ENCODE measurements at regions of chr14 and their contacts with region 1.

Region 1: GRCh38 chr14:64891839-64892375 is 12.2 kb upstream of the SPTB start:
- DNase-seq: peak in 7 of 9 donors; percentile 41 to 68 (median 61)
- ATAC-seq: peak; percentile 90
- H3K4me3 ChIP-seq: no peak overlapping the region
- H3K4me3 Mint-ChIP-seq: no peak overlapping the region
- H3K27ac ChIP-seq: no peak overlapping the region
- H3K27ac Mint-ChIP-seq: no peak overlapping the region
- H3K4me1 ChIP-seq: no peaks in the 10 kb centered on the region
- H3K4me1 Mint-ChIP-seq: peaks cover 0 to 3% (median 0%) of the 10 kb centered on the region in 7 donors
- H3K27me3 ChIP-seq: no peaks in the 10 kb centered on the region
- H3K27me3 Mint-ChIP-seq: peaks cover 0 to 39% (median 9%) of the 10 kb centered on the region in 5 donors

Region 2: DNA sequence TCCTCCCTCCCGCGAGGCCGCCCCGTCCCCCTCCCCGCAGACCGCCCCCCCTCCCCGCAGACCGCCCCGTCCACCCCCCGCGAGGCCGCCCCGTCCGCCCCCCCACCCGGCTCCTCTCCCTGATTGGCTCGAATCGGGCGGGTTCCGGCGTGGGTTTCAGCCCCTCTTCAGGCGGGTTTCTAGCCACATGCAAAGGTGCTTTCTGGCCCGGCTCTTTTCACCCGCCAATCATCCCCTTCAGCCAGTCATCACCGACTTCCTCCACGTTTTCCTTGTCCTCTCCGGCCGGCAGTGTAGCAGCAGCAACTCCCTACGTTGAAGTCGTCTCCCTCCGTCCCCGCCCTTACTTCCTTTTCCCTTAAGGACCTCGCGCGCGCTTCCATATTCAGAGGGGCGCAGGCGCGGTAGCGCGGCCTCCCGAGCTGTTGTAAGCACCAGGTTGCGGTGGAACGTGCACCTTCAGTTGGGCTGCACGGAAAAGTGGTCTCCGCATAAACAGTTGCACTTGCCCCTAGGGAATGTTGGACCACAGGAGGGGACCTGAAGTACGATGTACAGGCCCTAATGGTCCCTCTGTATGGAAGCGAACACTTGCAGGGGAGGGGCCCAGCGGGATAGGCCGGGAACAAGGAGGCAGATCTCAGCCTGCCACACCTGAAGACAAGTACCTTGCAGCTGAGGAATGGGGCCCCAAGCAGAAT is 553.1 kb before region 1 on chr14:
- CTCF ChIA-PET with region 1: no interaction called
- POLR2A ChIA-PET with region 1: no interaction called
- intact Hi-C with region 1: loop called (anchors 5 to 10 kb)
- DNase-seq: peak; percentile 50 to 84 (median 79)
- ATAC-seq: peak; percentile 87
- H3K4me3 ChIP-seq: peak overlapping the region; percentile 57
- H3K4me3 Mint-ChIP-seq: peak overlapping the region; percentile 87 to 99 (median 92)
- H3K27ac ChIP-seq: peak overlapping the region; percentile 72
- H3K27ac Mint-ChIP-seq: peak overlapping the region; percentile 81 to 91 (median 86)
- H3K4me1 ChIP-seq: peaks cover 5 to 10% of the 10 kb centered on the region in 2 donors
- H3K4me1 Mint-ChIP-seq: peaks cover 6 to 36% (median 19%) of the 10 kb centered on the region in 7 donors
- H3K27me3 ChIP-seq: no peaks in the 10 kb centered on the region
- H3K27me3 Mint-ChIP-seq: no peaks in the 10 kb centered on the region

Region 3: GRCh38 chr14:64764641-64765520 is 127.0 kb before region 1 on chr14:
- CTCF ChIA-PET with region 1: interaction called, 9 read pairs
- POLR2A ChIA-PET with region 1: no interaction called
- intact Hi-C with region 1: loop called in 1 of 2 experiments (anchors 5 kb)
- DNase-seq: peak; percentile 33 to 71 (median 59)
- ATAC-seq: peak; percentile 86
- H3K4me3 ChIP-seq: peak overlapping the region; percentile 39
- H3K4me3 Mint-ChIP-seq: peak overlapping the region in 9 of 10 donors; percentile 36 to 78 (median 65)
- H3K27ac ChIP-seq: no peak overlapping the region
- H3K27ac Mint-ChIP-seq: peak overlapping the region in 3 of 9 donors; percentile 48 to 62 (median 49)
- H3K4me1 ChIP-seq: peaks cover 0 to 31% of the 10 kb centered on the region in 2 donors
- H3K4me1 Mint-ChIP-seq: peaks cover 2 to 44% (median 23%) of the 10 kb centered on the region in 7 donors
- H3K27me3 ChIP-seq: no peaks in the 10 kb centered on the region
- H3K27me3 Mint-ChIP-seq: peaks cover 0 to 21% (median 0%) of the 10 kb centered on the region in 5 donors

Region 4: DNA sequence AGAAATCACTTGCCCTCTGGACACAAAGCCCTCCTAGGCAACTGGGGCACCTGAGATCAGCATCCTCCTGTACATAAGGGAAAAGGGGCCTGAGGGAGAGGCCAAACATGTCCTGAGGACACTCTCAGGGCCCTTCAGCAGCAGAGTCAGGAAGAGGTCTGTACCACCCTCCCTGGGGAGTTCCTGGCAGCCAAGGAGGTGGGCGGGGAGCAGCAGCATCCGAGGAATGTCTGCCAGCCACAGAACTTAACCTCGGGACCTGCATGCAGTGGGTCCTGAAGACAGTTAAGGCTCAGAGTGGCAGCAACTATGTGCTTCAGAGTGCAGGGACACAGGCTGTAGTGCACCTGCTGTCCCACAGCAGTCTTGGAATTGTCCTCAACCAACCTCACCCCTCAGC is 74.3 kb before region 1 on chr14:
- CTCF ChIA-PET with region 1: interaction called, 141 read pairs
- POLR2A ChIA-PET with region 1: no interaction called
- intact Hi-C with region 1: loop called (anchors 5 kb)
- DNase-seq: no peak
- ATAC-seq: no peak
- H3K4me3 ChIP-seq: no peak overlapping the region
- H3K4me3 Mint-ChIP-seq: no peak overlapping the region
- H3K27ac ChIP-seq: no peak overlapping the region
- H3K27ac Mint-ChIP-seq: no peak overlapping the region
- H3K4me1 ChIP-seq: no peaks in the 10 kb centered on the region
- H3K4me1 Mint-ChIP-seq: peaks cover 0 to 1% (median 0%) of the 10 kb centered on the region in 7 donors
- H3K27me3 ChIP-seq: no peaks in the 10 kb centered on the region
- H3K27me3 Mint-ChIP-seq: peaks cover 7 to 66% (median 13%) of the 10 kb centered on the region in 5 donors

Region 5: DNA sequence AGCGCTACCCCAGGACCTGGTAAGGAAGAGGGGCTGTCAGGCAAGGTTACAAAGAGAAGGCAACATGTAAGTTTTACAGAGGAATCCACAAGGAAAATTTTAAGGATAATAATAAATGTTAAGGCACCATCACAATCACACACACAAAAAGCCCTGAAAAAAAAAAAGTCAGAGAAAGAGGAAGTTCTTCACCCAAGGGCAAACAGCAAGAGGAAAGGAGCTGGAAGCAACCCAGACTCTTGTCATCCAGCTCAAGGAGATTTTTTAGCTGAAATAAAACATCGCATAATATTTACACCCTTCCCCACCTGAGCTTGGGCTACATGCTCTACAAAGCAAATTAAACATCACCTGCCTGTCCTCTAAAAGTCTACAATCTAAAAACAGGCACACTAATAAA is 21.7 kb before region 1 on chr14:
- CTCF ChIA-PET with region 1: interaction called, 10 read pairs
- POLR2A ChIA-PET with region 1: no interaction called
- intact Hi-C with region 1: no loop called
- DNase-seq: no peak
- ATAC-seq: no peak
- H3K4me3 ChIP-seq: no peak overlapping the region
- H3K4me3 Mint-ChIP-seq: no peak overlapping the region
- H3K27ac ChIP-seq: no peak overlapping the region
- H3K27ac Mint-ChIP-seq: no peak overlapping the region
- H3K4me1 ChIP-seq: no peaks in the 10 kb centered on the region
- H3K4me1 Mint-ChIP-seq: no peaks in the 10 kb centered on the region
- H3K27me3 ChIP-seq: no peaks in the 10 kb centered on the region
- H3K27me3 Mint-ChIP-seq: peaks cover 14 to 66% (median 32%) of the 10 kb centered on the region in 5 donors

Region 6: GRCh38 chr14:64906022-64906421 is 14.1 kb after region 1 on chr14:
- CTCF ChIA-PET with region 1: interaction called, 19 read pairs
- POLR2A ChIA-PET with region 1: no interaction called
- intact Hi-C with region 1: no loop called
- DNase-seq: no peak
- ATAC-seq: no peak
- H3K4me3 ChIP-seq: no peak overlapping the region
- H3K4me3 Mint-ChIP-seq: no peak overlapping the region
- H3K27ac ChIP-seq: no peak overlapping the region
- H3K27ac Mint-ChIP-seq: no peak overlapping the region
- H3K4me1 ChIP-seq: no peaks in the 10 kb centered on the region
- H3K4me1 Mint-ChIP-seq: peaks cover 0 to 4% (median 0%) of the 10 kb centered on the region in 7 donors
- H3K27me3 ChIP-seq: no peaks in the 10 kb centered on the region
- H3K27me3 Mint-ChIP-seq: peaks cover 0 to 50% (median 5%) of the 10 kb centered on the region in 5 donors

Region 7: DNA sequence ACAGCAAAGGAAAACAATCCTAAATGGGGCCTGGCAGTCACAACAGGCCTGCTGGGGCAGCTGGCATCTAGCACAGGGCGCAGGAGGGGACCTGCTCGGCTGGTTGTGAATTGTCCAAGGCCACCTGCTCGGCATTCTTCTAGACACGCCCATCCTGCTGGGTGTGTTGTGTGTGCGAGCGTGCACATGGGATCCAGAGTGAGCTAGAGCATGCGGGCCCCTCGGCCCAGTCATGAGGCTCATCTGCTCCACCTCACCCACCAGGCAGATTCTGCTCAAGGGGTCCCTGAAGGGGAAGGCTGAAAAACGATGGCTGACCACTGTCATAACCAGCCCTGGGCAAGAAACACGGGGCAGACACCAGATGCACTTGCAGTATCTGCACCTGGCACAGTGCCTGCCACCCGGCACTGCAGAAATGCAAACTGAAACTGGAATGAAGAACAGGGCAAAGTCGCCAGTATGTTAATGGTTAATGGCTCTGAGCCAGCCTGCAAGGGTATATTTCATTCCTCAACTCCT is 178.6 kb after region 1 on chr14:
- CTCF ChIA-PET with region 1: no interaction called
- POLR2A ChIA-PET with region 1: no interaction called
- intact Hi-C with region 1: no loop called
- DNase-seq: no peak
- ATAC-seq: no peak
- H3K4me3 ChIP-seq: no peak overlapping the region
- H3K4me3 Mint-ChIP-seq: no peak overlapping the region
- H3K27ac ChIP-seq: no peak overlapping the region
- H3K27ac Mint-ChIP-seq: no peak overlapping the region
- H3K4me1 ChIP-seq: no peaks in the 10 kb centered on the region
- H3K4me1 Mint-ChIP-seq: peaks cover 12 to 24% (median 19%) of the 10 kb centered on the region in 7 donors
- H3K27me3 ChIP-seq: no peaks in the 10 kb centered on the region
- H3K27me3 Mint-ChIP-seq: no peaks in the 10 kb centered on the region

Measured in naive thymus-derived CD4-positive, alpha-beta T cell (primary cell).